Psoas muscle (tissue), 8 donors: ENCODE measurements at regions of chr18 and their contacts with region 1.

Region 1: DNA sequence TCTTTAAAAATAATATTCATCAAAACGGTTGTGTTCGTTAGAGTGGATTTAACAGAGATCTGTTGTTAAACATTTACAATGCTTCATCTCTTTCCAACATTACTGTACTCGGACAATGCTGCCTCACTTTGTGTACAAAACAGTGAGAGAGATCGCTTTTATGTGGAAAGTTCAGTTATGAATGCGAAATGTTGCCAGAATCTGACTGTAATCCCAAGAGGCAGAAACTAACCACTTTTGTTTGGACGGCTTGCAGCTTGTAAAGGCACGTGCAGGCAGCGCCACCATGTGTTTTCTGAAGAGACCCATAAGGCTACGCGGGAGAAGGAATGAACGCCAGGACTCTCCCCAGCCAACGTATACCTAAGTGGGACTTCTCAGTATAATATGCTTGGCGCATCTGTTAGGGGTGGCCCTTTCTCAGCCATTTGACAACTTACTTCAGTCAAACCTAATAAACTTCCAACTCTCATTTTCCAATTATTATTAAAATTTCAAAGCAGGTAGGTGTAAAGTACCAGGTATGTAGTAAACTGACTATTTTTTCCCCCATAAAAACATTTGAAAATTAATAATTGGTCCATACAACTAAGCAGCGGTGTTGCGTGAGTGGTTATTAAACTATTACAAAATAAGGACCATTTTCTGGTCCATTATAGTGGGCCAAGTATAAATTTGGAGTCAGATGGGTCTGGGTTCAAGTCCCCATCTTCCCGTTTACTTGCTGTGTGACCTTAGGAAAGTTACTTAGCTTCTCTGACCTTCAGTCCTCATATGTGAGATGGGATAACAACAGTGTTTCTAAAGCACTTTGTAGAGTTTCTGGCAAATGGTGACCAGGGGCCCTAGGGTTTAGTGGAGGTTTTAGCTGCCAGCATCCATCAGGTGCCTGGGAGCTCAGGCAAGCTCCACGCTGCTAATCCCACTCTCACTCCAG is 5.6 kb upstream of the NAPG start:
- DNase-seq: peak; percentile 77 to 87
- ATAC-seq: peak; percentile 82 to 94 (median 85)
- H3K4me3 ChIP-seq: no peak overlapping the region
- H3K27ac ChIP-seq: no peak overlapping the region
- H3K4me1 ChIP-seq: no peaks in the 10 kb centered on the region
- H3K27me3 ChIP-seq: no peaks in the 10 kb centered on the region
- CTCF ChIP-seq: peak; percentile 79

Region 2: DNA sequence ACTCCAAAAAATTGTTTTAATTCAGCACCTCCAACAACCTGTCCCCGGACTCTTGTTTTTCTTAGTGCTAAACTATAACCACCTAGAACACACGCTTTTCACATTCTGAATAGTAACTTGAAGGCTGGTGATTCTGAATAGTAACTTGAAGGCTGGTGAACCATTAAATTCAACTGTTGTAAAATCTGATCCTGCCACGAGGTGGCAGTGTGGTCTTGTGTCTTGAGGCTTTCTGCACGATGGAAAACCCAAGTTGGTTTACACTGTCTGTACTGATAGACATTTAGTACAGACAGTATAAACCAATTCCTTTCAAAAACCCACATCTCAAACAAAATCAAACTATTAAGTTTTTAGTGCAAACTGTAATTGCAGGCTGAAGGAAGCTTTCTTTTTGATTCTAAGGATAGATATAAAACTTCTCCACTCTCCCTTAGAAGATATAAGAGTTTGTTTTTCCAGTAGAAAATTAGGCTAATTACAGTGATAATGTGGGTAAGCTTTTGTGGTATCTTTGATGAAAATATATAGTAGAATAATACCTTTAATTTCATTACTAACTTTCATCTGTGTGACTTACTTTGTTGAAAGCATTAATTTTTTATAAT is 548.9 kb before region 1 on chr18:
- intact Hi-C with region 1: loop called (anchors 1 to 2 kb)
- DNase-seq: peak in 1 of 2 donors; percentile 43
- ATAC-seq: peak; percentile 69 to 92 (median 80)
- H3K4me3 ChIP-seq: no peak overlapping the region
- H3K27ac ChIP-seq: no peak overlapping the region
- H3K4me1 ChIP-seq: no peaks in the 10 kb centered on the region
- H3K27me3 ChIP-seq: no peaks in the 10 kb centered on the region
- CTCF ChIP-seq: peak; percentile 81

Region 3: GRCh38 chr18:10006311-10006893 is 513.9 kb before region 1 on chr18:
- intact Hi-C with region 1: loop called in 1 of 2 experiments (anchors 2 kb)
- DNase-seq: no peak
- ATAC-seq: peak in 2 of 4 donors; percentile 36 to 43
- H3K4me3 ChIP-seq: no peak overlapping the region
- H3K27ac ChIP-seq: no peak overlapping the region
- H3K4me1 ChIP-seq: peaks cover 14% of the 10 kb centered on the region
- H3K27me3 ChIP-seq: peaks cover 0 to 3% (median 0%) of the 10 kb centered on the region in 3 donors
- CTCF ChIP-seq: peak; percentile 26

Region 4: GRCh38 chr18:10270151-10270571 is 250.1 kb before region 1 on chr18:
- intact Hi-C with region 1: no loop called
- DNase-seq: no peak
- ATAC-seq: peak in 3 of 4 donors; percentile 56 to 67 (median 65)
- H3K4me3 ChIP-seq: no peak overlapping the region
- H3K27ac ChIP-seq: no peak overlapping the region
- H3K4me1 ChIP-seq: no peaks in the 10 kb centered on the region
- H3K27me3 ChIP-seq: no peaks in the 10 kb centered on the region
- CTCF ChIP-seq: no peak

Region 5: GRCh38 chr18:10374636-10375293 is 145.5 kb before region 1 on chr18:
- intact Hi-C with region 1: no loop called
- DNase-seq: no peak
- ATAC-seq: no peak
- H3K4me3 ChIP-seq: no peak overlapping the region
- H3K27ac ChIP-seq: no peak overlapping the region
- H3K4me1 ChIP-seq: no peaks in the 10 kb centered on the region
- H3K27me3 ChIP-seq: peaks cover 0 to under 1% (median 0%) of the 10 kb centered on the region in 3 donors
- CTCF ChIP-seq: no peak

Region 6: DNA sequence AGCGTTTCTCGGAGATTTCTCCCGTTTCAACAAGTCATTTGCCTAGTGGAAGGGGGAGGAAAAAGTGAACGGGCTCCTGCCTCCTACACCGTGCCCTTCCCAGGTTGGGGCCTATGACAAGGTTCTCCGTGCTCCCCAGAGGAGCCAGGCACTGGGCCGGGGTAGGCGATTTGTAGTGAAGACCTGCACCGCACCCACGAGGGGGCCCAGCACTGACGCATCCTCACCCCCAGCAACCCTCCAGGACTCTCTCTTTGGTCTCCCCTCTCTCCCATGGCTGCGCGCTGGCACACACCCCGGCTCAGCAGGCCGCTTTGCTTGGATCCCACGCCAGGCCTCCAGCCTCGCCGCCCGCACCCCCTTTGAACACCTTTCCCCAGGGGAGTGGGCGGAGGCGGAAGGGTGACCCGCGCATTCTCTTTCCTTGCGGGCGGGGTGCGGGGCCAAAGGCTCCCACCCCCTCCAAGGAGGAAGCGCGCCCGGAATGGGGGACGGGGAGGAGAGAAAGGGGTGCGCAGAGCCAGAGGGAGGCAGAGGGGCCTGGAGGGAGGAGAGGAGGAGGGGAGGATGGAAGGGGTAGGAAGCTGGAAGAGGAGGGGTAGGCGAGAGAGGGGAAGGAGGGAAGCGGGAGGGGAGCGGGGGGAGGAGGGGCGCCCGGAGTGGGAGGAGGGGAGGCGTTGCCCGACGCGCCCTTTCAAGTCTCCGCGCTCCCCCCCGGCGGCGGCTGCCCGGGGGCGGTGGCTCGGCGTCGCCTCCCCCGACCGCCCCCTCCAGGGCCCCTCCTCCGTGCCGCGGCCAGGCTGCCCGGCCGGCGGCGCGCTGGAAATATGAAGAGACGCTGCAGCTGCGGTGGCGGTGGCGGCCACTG is 66.2 kb before region 1 on chr18 and contains the start of gene APCDD1:
- intact Hi-C with region 1: loop called in 1 of 2 experiments (anchors 2 kb)
- DNase-seq: peak; percentile 77 to 89
- ATAC-seq: peak; percentile 58 to 84 (median 76)
- H3K4me3 ChIP-seq: peak within 1 kb of the TSS; percentile 68
- H3K27ac ChIP-seq: peak within 1 kb of the TSS; percentile 54
- H3K4me1 ChIP-seq: peaks cover 12% of the 10 kb centered on the region
- H3K27me3 ChIP-seq: peaks cover 0 to 39% (median 3%) of the 10 kb centered on the region in 3 donors
- CTCF ChIP-seq: no peak
- total RNA-seq, gene APCDD1: 1.4 to 47.0 (median 9.3) TPM